Psoas muscle (tissue), 8 donors: ENCODE measurements at regions of chr1 and their contacts with region 1.

Region 1: GRCh38 chr1:36149237-36149972 is at the start of gene TRAPPC3:
- DNase-seq: peak; percentile 100
- ATAC-seq: peak; percentile 88 to 92 (median 90)
- H3K4me3 ChIP-seq: peak within 1 kb of the TSS; percentile 79
- H3K27ac ChIP-seq: peak within 1 kb of the TSS; percentile 93
- H3K4me1 ChIP-seq: peaks cover 39% of the 10 kb centered on the region
- H3K27me3 ChIP-seq: no peaks in the 10 kb centered on the region
- CTCF ChIP-seq: peak; percentile 87
- total RNA-seq, gene TRAPPC3: 34.8 to 44.4 (median 38.7) TPM

Region 2: GRCh38 chr1:36088575-36089443 is 60.6 kb before region 1 on chr1 and contains the start of gene ADPRS:
- intact Hi-C with region 1: no loop called
- DNase-seq: peak; percentile 91 to 95
- ATAC-seq: peak; percentile 93 to 96 (median 94)
- H3K4me3 ChIP-seq: peak within 1 kb of the TSS; percentile 98
- H3K27ac ChIP-seq: peak within 1 kb of the TSS; percentile 98
- H3K4me1 ChIP-seq: peaks cover 22% of the 10 kb centered on the region
- H3K27me3 ChIP-seq: peaks cover 0 to 22% (median 4%) of the 10 kb centered on the region in 3 donors
- CTCF ChIP-seq: peak; percentile 98
- total RNA-seq, gene ADPRS: 20.5 to 40.2 (median 28.8) TPM

Region 3: DNA sequence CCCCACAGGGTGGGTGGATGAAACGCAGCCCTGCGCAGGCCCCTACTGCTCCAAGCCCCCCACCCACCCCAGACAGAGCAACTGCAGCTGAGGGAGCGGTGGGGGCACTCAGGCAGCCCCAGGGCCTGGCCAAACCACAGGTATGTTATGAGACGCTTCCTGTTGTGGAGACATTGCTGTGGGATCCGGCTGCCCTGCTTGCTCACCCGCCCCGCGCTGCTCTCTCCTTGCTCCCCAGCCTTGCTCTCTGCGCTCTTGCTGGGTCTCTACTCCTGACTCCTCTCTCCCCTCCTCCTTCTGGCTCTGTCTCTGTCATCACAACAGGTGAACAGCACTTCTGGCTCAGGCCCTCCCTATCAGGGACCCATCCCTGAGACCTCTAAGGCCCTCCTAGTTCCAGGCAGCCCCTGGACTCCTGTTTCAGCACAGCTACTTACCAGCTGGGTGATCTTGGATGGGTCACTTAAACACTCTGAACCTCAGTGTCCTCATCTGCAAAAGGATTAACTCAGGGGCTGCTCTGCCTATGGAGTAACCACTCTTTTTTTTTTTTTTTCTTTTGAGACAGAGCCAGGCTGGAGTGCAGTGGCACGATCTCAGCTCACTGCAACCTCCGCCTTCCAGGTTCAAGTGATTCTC is 40.2 kb before region 1 on chr1:
- intact Hi-C with region 1: no loop called
- DNase-seq: no peak
- ATAC-seq: peak in 1 of 4 donors; percentile 15
- H3K4me3 ChIP-seq: no peak overlapping the region
- H3K27ac ChIP-seq: no peak overlapping the region
- H3K4me1 ChIP-seq: no peaks in the 10 kb centered on the region
- H3K27me3 ChIP-seq: no peaks in the 10 kb centered on the region
- CTCF ChIP-seq: no peak

Region 4: DNA sequence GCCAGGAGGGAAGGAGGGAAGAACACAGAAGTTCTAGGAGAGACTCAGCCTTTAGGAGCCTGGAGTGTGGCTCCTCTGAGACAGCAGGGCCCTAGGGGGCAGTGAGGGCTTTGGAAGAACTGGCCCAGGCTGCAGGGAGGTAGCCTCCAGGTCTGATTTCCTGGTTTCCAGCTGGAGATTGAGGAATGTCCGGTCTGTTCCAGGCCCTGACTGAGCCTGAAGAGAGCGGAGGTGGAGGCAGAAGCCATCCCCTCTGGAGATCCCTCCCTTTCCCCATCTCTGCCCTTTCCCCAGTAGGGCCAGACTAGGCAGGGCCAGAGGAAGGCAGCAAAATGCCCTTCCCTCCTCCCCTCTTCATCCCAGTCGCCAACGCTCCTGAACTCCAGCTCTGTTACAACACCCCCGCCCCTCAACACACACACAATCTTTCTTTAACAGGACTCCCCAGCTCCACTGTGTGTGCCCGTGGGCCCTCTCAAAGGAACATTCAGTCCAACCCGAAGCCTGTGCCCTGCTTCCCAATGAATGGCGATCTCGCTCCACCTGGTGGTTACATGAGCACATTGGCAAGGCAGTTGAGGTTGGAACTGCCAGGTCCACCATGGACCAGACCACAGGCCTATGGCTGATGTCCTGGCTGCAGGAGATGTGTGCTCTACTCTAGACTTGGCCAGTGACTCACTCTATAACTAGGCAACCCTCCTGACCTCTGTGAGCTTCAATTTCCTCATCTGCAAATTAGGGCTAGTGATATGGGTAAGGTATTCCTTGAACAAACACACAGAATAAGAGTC is 38.6 kb after region 1 on chr1:
- intact Hi-C with region 1: loop called (anchors 1 to 2 kb)
- DNase-seq: peak; percentile 85 to 94
- ATAC-seq: peak; percentile 95 to 96 (median 96)
- H3K4me3 ChIP-seq: peak overlapping the region; percentile 22
- H3K27ac ChIP-seq: peak overlapping the region; percentile 89
- H3K4me1 ChIP-seq: peaks cover 19% of the 10 kb centered on the region
- H3K27me3 ChIP-seq: no peaks in the 10 kb centered on the region
- CTCF ChIP-seq: peak; percentile 93

Region 5: DNA sequence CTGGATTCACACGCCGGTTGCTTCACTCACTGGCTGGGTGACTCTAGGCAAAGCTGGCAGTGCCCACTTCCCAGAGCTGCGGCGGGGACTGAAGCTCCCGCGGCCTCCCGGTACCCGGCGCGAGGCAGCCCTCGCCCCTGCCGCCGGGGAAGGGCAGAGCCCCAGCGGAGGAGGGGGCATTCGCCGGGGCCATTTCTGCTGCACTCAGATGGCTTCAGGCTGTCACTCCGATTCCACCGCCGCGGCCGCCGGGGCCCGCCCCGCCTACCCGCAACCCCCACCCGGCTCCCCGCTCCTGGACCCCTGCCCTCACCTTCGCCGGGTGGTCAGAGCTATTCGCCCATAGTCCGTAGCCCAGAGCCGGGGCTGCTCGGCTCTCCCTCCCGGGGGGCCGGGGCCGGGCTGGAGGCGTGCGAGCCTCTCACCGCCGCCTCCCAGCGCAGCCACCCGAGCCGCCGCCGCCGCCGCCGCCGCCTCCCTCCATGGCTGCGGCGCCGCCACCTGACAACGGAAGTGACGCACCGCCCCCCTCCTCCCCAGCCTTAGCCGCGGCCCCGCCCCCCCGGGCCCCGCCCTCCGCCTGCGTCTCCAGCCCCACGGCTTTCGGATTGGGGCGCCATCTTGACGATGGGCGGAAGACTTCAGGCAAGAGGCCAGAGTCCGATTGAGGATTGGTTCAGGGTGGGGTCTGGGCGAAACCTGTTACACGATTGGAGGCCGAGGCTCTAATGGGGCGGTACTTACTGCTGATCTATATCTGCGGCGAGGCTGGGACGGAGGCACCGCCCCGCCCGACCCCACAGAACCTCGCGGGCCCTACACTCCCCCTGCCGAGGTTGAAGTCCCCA is 236.2 kb after region 1 on chr1 and contains the start of gene STK40:
- intact Hi-C with region 1: loop called in 1 of 2 experiments (anchors 10 kb)
- DNase-seq: peak; percentile 98 to 99
- ATAC-seq: peak; percentile 74 to 82 (median 78)
- H3K4me3 ChIP-seq: peak within 1 kb of the TSS; percentile 94
- H3K27ac ChIP-seq: peak within 1 kb of the TSS; percentile 92
- H3K4me1 ChIP-seq: peaks cover 77% of the 10 kb centered on the region
- H3K27me3 ChIP-seq: no peaks in the 10 kb centered on the region
- CTCF ChIP-seq: no peak
- total RNA-seq, gene STK40: 84.4 to 218 (median 145) TPM